ENCODE measurements at regions of chr1 and their contacts with region 1.

Region 1: DNA sequence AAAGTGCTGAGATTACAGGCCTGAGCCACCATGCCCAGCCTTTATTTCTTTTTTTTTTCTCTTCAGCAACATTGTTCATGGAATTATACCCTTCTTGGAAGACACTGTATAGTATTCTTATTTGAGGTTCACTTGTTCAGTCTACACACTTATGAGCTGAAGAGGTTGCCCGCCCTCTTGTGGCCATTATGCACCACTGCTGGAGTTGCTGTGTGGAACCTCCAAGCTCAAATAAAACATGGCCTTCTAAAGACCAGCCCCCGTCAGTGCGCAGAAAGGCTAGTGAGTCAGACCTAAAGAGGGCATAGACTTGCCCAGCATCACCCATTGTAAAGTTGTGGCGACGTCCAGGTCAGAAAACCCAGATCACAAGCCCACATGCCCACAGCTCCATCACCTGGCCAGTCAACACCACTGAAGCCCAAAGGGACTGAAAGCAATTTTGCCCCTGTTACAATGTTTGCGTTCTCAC is 20.4 kb downstream of the LURAP1 start:
- DNase-seq: peak in 1 of 2 donors; percentile 60
- ATAC-seq: peak; percentile 83 to 91 (median 86)
- H3K4me3 ChIP-seq: no peak overlapping the region
- H3K27ac ChIP-seq: no peak overlapping the region
- H3K4me1 ChIP-seq: peaks cover 0 to 27% (median 0%) of the 10 kb centered on the region in 9 donors
- H3K27me3 ChIP-seq: no peaks in the 10 kb centered on the region
- CTCF ChIP-seq: peak; percentile 72 to 95 (median 90)

Region 2: DNA sequence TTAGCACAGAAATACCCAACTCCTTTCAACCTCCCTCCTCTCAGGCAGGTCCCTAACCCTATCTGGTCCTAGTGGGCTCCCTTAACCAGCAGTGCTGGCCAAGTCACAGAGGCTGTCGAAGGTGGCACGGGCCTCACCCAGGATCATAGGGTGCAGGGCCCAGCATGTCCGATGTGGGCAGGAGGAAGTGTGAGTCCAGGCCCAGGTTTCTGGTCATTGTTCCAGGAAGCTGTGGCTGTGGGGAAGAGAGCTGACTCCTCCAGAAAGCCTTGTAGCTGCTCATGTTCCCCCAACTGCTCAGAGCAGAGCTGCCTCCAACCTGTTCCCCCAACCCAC is 602.0 kb before region 1 on chr1:
- intact Hi-C with region 1: no loop called
- DNase-seq: peak in 1 of 2 donors; percentile 22
- ATAC-seq: peak in 7 of 8 donors; percentile 15 to 30 (median 21)
- H3K4me3 ChIP-seq: no peak overlapping the region
- H3K27ac ChIP-seq: peak overlapping the region in 9 of 10 donors; percentile 31 to 77 (median 63)
- H3K4me1 ChIP-seq: peaks cover 6 to 46% (median 25%) of the 10 kb centered on the region in 9 donors
- H3K27me3 ChIP-seq: no peaks in the 10 kb centered on the region
- CTCF ChIP-seq: no peak

Region 3: GRCh38 chr1:46036894-46037839 is 186.3 kb before region 1 on chr1:
- intact Hi-C with region 1: loop called in 6 of 10 experiments (anchors 2 to 5 kb)
- DNase-seq: peak; percentile 82 to 89
- ATAC-seq: peak; percentile 42 to 81 (median 70)
- H3K4me3 ChIP-seq: no peak overlapping the region
- H3K27ac ChIP-seq: peak overlapping the region in 8 of 10 donors; percentile 2 to 46 (median 30)
- H3K4me1 ChIP-seq: peaks cover 8 to 64% (median 51%) of the 10 kb centered on the region in 9 donors
- H3K27me3 ChIP-seq: no peaks in the 10 kb centered on the region
- CTCF ChIP-seq: peak; percentile 96 to 98 (median 98)